Endothelial cell of umbilical vein (primary cell): ENCODE measurements at regions of chr3 and their contacts with region 1.

Region 1: GRCh38 chr3:33773637-33774036 is 24.8 kb upstream of the PDCD6IP start:
- DNase-seq: no peak
- H3K4me3 ChIP-seq: no peak overlapping the region
- H3K27ac ChIP-seq: no peak overlapping the region
- H3K4me1 ChIP-seq: no peaks in the 10 kb centered on the region
- H3K27me3 ChIP-seq: no peaks in the 10 kb centered on the region
- CTCF ChIP-seq: no peak
- POLR2A ChIP-seq: no peak

Region 2: DNA sequence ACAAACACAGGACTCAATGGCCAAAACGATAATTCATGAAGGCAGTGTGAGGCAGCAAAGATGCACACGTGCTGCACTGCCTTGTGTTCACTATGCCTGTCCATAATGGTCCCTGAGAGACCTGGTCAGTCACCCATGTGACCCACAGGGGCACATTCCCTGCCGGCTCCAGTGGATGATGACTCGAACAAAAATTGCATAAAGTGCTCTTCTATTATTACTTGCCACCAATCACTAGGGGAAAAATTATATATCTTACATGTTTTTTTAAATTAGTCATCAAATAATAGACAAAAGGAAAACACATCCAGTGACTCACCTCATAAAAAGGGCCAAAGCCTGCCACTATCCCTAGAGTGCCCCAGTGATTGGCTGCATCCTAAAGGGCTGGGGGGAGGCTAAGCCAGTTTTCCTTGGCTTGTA is 380.9 kb before region 1 on chr3:
- CTCF ChIA-PET with region 1: interaction called, 3 read pairs
- POLR2A ChIA-PET with region 1: interaction called, 12 read pairs
- dilution Hi-C with region 1: no loop called
- intact Hi-C with region 1: no loop called
- DNase-seq: peak; percentile 92
- H3K4me3 ChIP-seq: no peak overlapping the region
- H3K27ac ChIP-seq: peak overlapping the region; percentile 77
- H3K4me1 ChIP-seq: peaks cover 46% of the 10 kb centered on the region
- H3K27me3 ChIP-seq: no peaks in the 10 kb centered on the region
- CTCF ChIP-seq: no peak
- POLR2A ChIP-seq: no peak

Region 3: DNA sequence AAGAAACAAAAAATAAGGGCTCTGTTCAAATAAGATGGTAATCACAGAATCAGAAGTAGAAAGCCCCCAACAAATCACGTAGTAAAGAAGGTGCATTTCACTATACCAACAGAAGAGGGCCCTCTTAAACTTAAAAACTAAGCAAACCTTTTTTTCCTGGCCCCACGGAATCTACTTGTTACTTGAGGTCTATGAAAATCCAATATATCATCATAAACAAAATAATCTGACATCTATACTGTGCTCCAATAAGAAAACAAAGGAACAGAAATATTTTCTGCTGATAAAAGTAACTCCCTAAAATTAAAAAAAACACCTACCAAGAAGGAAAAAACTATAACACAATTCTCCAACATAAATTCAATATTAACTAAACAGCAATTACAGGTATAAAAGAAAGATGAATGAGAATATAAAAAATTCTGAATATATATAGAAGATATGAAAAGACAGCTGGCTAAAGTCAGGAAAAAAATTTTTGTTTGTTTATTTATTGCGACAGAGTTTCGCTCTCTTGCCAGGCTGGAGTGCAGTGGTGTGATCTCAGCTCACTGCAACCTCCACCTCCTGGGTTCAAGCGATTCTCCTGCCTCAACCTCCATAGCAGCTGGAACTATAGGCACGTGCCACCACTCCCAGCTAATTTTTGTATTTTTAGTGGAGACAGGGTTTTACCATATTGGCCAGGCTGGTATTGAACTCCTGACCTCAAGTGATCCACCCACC is 137.3 kb before region 1 on chr3:
- CTCF ChIA-PET with region 1: interaction called, 78 read pairs
- POLR2A ChIA-PET with region 1: no interaction called
- dilution Hi-C with region 1: no loop called
- intact Hi-C with region 1: loop called (anchors 1 kb)
- DNase-seq: peak; percentile 70
- H3K4me3 ChIP-seq: no peak overlapping the region
- H3K27ac ChIP-seq: no peak overlapping the region
- H3K4me1 ChIP-seq: no peaks in the 10 kb centered on the region
- H3K27me3 ChIP-seq: no peaks in the 10 kb centered on the region
- CTCF ChIP-seq: peak; percentile 33 to 42
- POLR2A ChIP-seq: no peak

Region 4: DNA sequence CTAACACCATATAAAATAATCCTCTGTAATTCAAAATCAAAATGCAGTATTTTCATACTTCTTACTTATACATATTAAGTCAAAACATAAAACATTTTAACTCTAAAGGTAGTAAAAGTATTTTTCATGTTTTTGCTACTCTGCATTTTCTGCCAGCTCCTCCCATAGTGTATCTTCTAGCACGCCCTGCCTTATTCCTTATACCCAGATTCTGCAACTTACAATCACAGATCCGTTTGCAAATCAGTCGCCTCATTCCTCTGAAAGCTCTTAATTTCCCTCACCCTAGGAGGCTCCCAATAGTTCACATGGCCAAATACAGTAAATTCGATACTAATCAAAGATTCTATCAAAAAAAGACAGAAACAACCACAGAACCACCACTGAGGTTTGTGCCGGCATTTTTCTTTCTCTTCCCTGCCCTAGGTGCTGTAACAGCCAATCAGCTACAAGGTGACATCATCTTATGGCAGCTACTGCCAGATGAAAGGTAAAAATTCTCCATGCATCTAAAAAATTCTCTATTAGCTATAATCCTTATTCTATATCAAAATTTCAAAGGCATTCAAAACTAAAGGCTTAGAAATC is 128.5 kb before region 1 on chr3:
- CTCF ChIA-PET with region 1: interaction called, 20 read pairs
- POLR2A ChIA-PET with region 1: no interaction called
- dilution Hi-C with region 1: no loop called
- intact Hi-C with region 1: no loop called
- DNase-seq: peak; percentile 41
- H3K4me3 ChIP-seq: peak overlapping the region in 2 of 3 experiments; percentile 19 to 36
- H3K27ac ChIP-seq: no peak overlapping the region
- H3K4me1 ChIP-seq: no peaks in the 10 kb centered on the region
- H3K27me3 ChIP-seq: no peaks in the 10 kb centered on the region
- CTCF ChIP-seq: no peak
- POLR2A ChIP-seq: no peak

Region 5: GRCh38 chr3:33758864-33759263 is 14.8 kb before region 1 on chr3:
- CTCF ChIA-PET with region 1: interaction called, 14 read pairs
- POLR2A ChIA-PET with region 1: no interaction called
- dilution Hi-C with region 1: no loop called
- intact Hi-C with region 1: no loop called
- DNase-seq: no peak
- H3K4me3 ChIP-seq: no peak overlapping the region
- H3K27ac ChIP-seq: no peak overlapping the region
- H3K4me1 ChIP-seq: no peaks in the 10 kb centered on the region
- H3K27me3 ChIP-seq: no peaks in the 10 kb centered on the region
- CTCF ChIP-seq: no peak
- POLR2A ChIP-seq: no peak